K562 (cell line): ENCODE measurements at regions of chr14 and their contacts with region 1.

Region 1: GRCh38 chr14:30558675-30559555 is at the start of gene G2E3:
- DNase-seq: peak; percentile 76 to 91 (median 81)
- ATAC-seq: peak; percentile 95
- H3K4me3 ChIP-seq: peak within 1 kb of the TSS; percentile 83
- H3K27ac ChIP-seq: peak within 1 kb of the TSS; percentile 92
- H3K4me1 ChIP-seq: peaks cover 0 to 9% of the 10 kb centered on the region in 2 experiments; a peak in 2 of 5 replicates
- H3K27me3 ChIP-seq: no peaks in the 10 kb centered on the region
- CTCF ChIP-seq: no peak
- EP300 ChIP-seq: no peak
- POLR2A ChIP-seq: peak; percentile 86
- RAD21 ChIP-seq: no peak
- polyA plus RNA-seq, gene G2E3: 20.2 to 53.5 TPM

Region 2: DNA sequence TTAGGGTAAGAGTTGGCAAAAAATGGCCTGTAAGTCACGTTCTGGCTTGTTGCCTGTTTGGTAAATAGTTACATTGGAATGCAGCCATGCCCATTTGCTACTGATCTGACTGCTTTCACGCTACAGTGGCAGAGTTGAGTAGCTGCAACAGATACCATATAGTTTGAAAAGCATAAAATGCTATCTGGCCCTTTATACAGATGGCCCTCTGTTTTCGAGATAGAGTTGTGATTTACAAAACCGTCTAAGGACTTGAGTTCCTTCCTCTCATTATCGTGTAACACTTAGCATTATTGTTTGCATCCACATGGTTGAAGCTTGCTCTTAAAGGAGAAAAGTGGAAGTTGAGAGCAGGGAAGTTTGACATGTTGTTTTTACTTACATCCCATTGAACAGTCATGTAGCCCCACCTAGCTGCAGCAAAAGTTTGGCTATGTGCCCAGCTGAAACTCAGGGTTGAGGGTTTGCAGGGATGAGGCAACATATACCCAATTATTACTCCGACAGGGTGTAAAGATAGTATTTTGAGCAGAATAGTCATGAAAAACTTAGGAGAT is 52.0 kb after region 1 on chr14:
- CTCF ChIA-PET with region 1: interaction called, 3 read pairs
- POLR2A ChIA-PET with region 1: interaction called, 3 read pairs
- in situ Hi-C with region 1: no loop called
- intact Hi-C with region 1: loop called (anchors 1 kb)
- DNase-seq: peak in 3 of 4 experiments; percentile 10 to 68 (median 38)
- ATAC-seq: peak; percentile 88
- H3K4me3 ChIP-seq: no peak overlapping the region
- H3K27ac ChIP-seq: no peak overlapping the region
- H3K4me1 ChIP-seq: no peaks in the 10 kb centered on the region
- H3K27me3 ChIP-seq: no peaks in the 10 kb centered on the region
- CTCF ChIP-seq: peak in 2 of 3 experiments; percentile 37 to 58; a peak in 2 of 6 replicates
- EP300 ChIP-seq: no peak
- POLR2A ChIP-seq: no peak
- RAD21 ChIP-seq: peak; percentile 51 to 63; a peak in 3 of 4 replicates

Region 3: GRCh38 chr14:30906752-30907658 is 348.1 kb after region 1 on chr14:
- CTCF ChIA-PET with region 1: no interaction called
- POLR2A ChIA-PET with region 1: no interaction called
- in situ Hi-C with region 1: no loop called
- intact Hi-C with region 1: loop called (anchors 5 kb)
- DNase-seq: no peak
- ATAC-seq: peak; percentile 53
- H3K4me3 ChIP-seq: no peak overlapping the region
- H3K27ac ChIP-seq: no peak overlapping the region
- H3K4me1 ChIP-seq: peaks cover 0 to 6% of the 10 kb centered on the region in 2 experiments; a peak in 2 of 5 replicates
- H3K27me3 ChIP-seq: no peaks in the 10 kb centered on the region
- CTCF ChIP-seq: peak in 1 of 3 experiments; percentile 28; a peak in 1 of 6 replicates
- EP300 ChIP-seq: no peak
- POLR2A ChIP-seq: no peak
- RAD21 ChIP-seq: peak in 1 of 2 experiments; percentile 43; a peak in 2 of 4 replicates